ENCODE measurements at regions of chr4 and their contacts with region 1.

Region 1: GRCh38 chr4:134470544-134470943 is 269.0 kb upstream of the PABPC4L start:
- DNase-seq: peak; percentile 63
- H3K4me3 ChIP-seq: no peak overlapping the region
- H3K27ac ChIP-seq: no peak overlapping the region
- H3K4me1 ChIP-seq: peaks cover 2% of the 10 kb centered on the region
- H3K27me3 ChIP-seq: no peaks in the 10 kb centered on the region
- CTCF ChIP-seq: peak; percentile 26 to 28
- POLR2A ChIP-seq: no peak

Region 2: GRCh38 chr4:134585972-134586371 is 115.4 kb after region 1 on chr4:
- CTCF ChIA-PET with region 1: no interaction called
- POLR2A ChIA-PET with region 1: no interaction called
- dilution Hi-C with region 1: no loop called
- intact Hi-C with region 1: loop called (anchors 1 kb)
- DNase-seq: peak; percentile 97
- H3K4me3 ChIP-seq: no peak overlapping the region
- H3K27ac ChIP-seq: peak overlapping the region; percentile 86
- H3K4me1 ChIP-seq: peaks cover 17% of the 10 kb centered on the region
- H3K27me3 ChIP-seq: no peaks in the 10 kb centered on the region
- CTCF ChIP-seq: no peak
- POLR2A ChIP-seq: peak; percentile 79

Region 3: DNA sequence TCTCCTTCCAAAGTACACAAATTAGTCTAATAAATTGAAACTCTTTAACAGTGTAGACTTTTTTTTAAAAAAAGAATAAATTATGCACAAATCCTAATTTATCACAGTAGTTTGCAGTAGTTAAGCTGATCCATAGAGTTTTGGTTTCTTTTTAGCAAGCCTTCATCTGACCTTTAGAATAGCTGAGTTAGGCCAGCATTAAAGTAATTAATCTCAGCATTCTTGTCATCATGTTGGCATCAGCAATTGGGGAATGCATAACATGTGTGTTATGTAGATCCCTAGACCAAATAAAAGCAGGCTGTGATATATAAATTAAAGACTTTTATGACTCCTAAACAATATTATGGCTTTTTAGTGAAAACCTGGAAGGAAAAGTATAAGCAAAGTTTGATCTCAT is 157.5 kb after region 1 on chr4:
- CTCF ChIA-PET with region 1: no interaction called
- POLR2A ChIA-PET with region 1: no interaction called
- dilution Hi-C with region 1: no loop called
- intact Hi-C with region 1: loop called (anchors 10 kb)
- DNase-seq: no peak
- H3K4me3 ChIP-seq: no peak overlapping the region
- H3K27ac ChIP-seq: no peak overlapping the region
- H3K4me1 ChIP-seq: peaks cover 13% of the 10 kb centered on the region
- H3K27me3 ChIP-seq: no peaks in the 10 kb centered on the region
- CTCF ChIP-seq: no peak
- POLR2A ChIP-seq: no peak

Region 4: DNA sequence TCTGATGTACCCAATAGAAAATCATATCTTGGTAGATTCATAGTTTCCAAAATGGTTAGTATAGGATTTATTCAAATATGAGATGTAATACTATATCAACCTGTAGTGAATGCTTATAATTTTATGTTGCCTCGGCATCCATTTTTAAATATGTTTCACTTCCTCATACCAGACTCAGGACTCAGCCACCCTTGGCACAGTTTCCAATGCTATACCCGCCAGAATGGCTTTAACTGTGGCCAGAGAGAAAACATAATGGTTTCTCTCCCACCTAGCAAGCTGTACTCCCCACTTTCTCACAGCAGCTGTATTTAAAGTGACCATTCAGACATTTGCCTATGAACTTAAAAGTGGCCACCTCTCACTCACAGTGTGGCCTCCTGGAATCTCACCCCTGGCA is 197.7 kb after region 1 on chr4:
- CTCF ChIA-PET with region 1: no interaction called
- POLR2A ChIA-PET with region 1: no interaction called
- dilution Hi-C with region 1: no loop called
- intact Hi-C with region 1: no loop called
- DNase-seq: no peak
- H3K4me3 ChIP-seq: no peak overlapping the region
- H3K27ac ChIP-seq: no peak overlapping the region
- H3K4me1 ChIP-seq: no peaks in the 10 kb centered on the region
- H3K27me3 ChIP-seq: no peaks in the 10 kb centered on the region
- CTCF ChIP-seq: no peak
- POLR2A ChIP-seq: no peak

Region 5: GRCh38 chr4:134777606-134778005 is 307.1 kb after region 1 on chr4:
- CTCF ChIA-PET with region 1: interaction called, 20 read pairs
- POLR2A ChIA-PET with region 1: no interaction called
- dilution Hi-C with region 1: no loop called
- intact Hi-C with region 1: loop called (anchors 1 kb)
- DNase-seq: peak; percentile 64
- H3K4me3 ChIP-seq: no peak overlapping the region
- H3K27ac ChIP-seq: no peak overlapping the region
- H3K4me1 ChIP-seq: peaks cover 2% of the 10 kb centered on the region
- H3K27me3 ChIP-seq: no peaks in the 10 kb centered on the region
- CTCF ChIP-seq: peak in 1 of 2 donors; percentile 13
- POLR2A ChIP-seq: no peak

Region 6: GRCh38 chr4:134906404-134907023 is 436.0 kb after region 1 on chr4:
- CTCF ChIA-PET with region 1: no interaction called
- POLR2A ChIA-PET with region 1: no interaction called
- dilution Hi-C with region 1: no loop called
- intact Hi-C with region 1: loop called (anchors 1 kb)
- DNase-seq: peak; percentile 40
- H3K4me3 ChIP-seq: no peak overlapping the region
- H3K27ac ChIP-seq: no peak overlapping the region
- H3K4me1 ChIP-seq: no peaks in the 10 kb centered on the region
- H3K27me3 ChIP-seq: no peaks in the 10 kb centered on the region
- CTCF ChIP-seq: peak in 1 of 2 donors; percentile 22
- POLR2A ChIP-seq: no peak

Region 7: DNA sequence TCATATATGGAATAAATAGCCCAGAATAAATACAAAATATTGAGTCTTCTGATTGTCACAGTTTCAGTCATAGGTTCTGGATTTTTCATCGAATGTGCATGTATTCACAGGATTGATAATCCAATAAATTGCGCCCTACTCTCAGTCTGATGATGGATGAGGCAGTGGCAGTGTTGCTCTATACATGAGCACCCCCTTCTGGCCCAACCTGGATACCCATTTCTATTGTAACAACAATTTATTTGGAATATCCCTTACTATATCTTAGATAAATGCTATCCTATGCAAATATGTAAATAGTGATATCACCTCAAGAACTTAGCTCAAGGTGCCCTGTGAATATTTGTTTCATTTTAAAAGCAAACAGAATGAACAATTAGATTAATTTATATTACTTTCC is 464.8 kb after region 1 on chr4:
- CTCF ChIA-PET with region 1: no interaction called
- POLR2A ChIA-PET with region 1: no interaction called
- dilution Hi-C with region 1: no loop called
- intact Hi-C with region 1: loop called (anchors 1 kb)
- DNase-seq: peak; percentile 49
- H3K4me3 ChIP-seq: no peak overlapping the region
- H3K27ac ChIP-seq: no peak overlapping the region
- H3K4me1 ChIP-seq: no peaks in the 10 kb centered on the region
- H3K27me3 ChIP-seq: no peaks in the 10 kb centered on the region
- CTCF ChIP-seq: peak in 1 of 2 donors; percentile 47
- POLR2A ChIP-seq: no peak